ENCODE measurements at regions of chr9 and their contacts with region 1.

Region 1: DNA sequence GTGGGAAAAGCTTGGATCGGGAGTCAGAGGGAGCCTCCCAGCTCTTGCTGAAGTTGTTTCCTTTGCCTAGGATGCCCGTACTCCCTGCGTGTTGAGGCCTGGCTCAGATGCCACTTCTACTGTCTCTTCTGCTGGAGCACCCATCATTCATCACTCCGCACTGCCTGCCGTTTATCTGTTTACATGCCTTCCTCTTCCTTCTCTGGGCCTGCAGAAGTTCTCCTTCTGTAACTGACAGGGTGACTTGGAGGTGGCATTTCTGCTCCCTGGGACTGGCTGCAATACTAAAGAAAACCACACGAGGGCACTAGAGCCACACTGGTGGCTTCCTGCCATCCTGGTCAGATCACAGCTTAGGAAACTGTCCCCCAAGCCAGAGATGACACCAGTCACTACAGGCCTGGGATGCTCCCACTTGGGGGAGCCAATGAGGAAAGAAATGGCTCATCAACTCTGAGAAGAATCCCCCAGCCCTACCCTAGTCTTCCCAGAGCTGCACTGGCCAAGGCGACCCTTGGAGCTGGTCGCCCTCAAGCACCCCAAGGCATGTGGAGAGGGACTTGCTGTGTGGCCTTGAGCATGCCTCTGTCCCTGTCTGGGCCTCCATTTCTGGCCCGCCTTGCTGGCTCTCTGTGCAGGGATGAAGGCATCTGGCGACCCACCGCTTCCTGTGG is 9.7 kb upstream of the SLC25A51 start:
- DNase-seq: peak; percentile 68 to 77 (median 70)
- H3K4me3 ChIP-seq: no peak overlapping the region
- H3K4me3 Mint-ChIP-seq: no peak overlapping the region
- H3K27ac ChIP-seq: no peak overlapping the region
- H3K27ac Mint-ChIP-seq: peak overlapping the region in 1 of 7 donors; percentile 2
- H3K4me1 ChIP-seq: no peaks in the 10 kb centered on the region
- H3K4me1 Mint-ChIP-seq: peaks cover 0 to 4% (median 0%) of the 10 kb centered on the region in 4 donors
- H3K27me3 ChIP-seq: no peaks in the 10 kb centered on the region
- H3K27me3 Mint-ChIP-seq: no peaks in the 10 kb centered on the region

Region 2: GRCh38 chr9:37271679-37272078 is 641.9 kb before region 1 on chr9:
- CTCF ChIA-PET with region 1: no interaction called
- POLR2A ChIA-PET with region 1: no interaction called
- intact Hi-C with region 1: no loop called
- DNase-seq: no peak
- H3K4me3 ChIP-seq: no peak overlapping the region
- H3K4me3 Mint-ChIP-seq: no peak overlapping the region
- H3K27ac ChIP-seq: no peak overlapping the region
- H3K27ac Mint-ChIP-seq: no peak overlapping the region
- H3K4me1 ChIP-seq: no peaks in the 10 kb centered on the region
- H3K4me1 Mint-ChIP-seq: peaks cover 0 to 10% (median under 1%) of the 10 kb centered on the region in 4 donors
- H3K27me3 ChIP-seq: no peaks in the 10 kb centered on the region
- H3K27me3 Mint-ChIP-seq: no peaks in the 10 kb centered on the region

Region 3: GRCh38 chr9:37769306-37769705 is 144.3 kb before region 1 on chr9:
- CTCF ChIA-PET with region 1: no interaction called
- POLR2A ChIA-PET with region 1: no interaction called
- intact Hi-C with region 1: no loop called
- DNase-seq: no peak
- H3K4me3 ChIP-seq: no peak overlapping the region
- H3K4me3 Mint-ChIP-seq: no peak overlapping the region
- H3K27ac ChIP-seq: no peak overlapping the region
- H3K27ac Mint-ChIP-seq: peak overlapping the region in 5 of 7 donors; percentile 30 to 74 (median 59)
- H3K4me1 ChIP-seq: no peaks in the 10 kb centered on the region
- H3K4me1 Mint-ChIP-seq: peaks cover 0 to 5% (median 4%) of the 10 kb centered on the region in 4 donors
- H3K27me3 ChIP-seq: no peaks in the 10 kb centered on the region
- H3K27me3 Mint-ChIP-seq: no peaks in the 10 kb centered on the region

Region 4: GRCh38 chr9:37852222-37852621 is 61.4 kb before region 1 on chr9:
- CTCF ChIA-PET with region 1: no interaction called
- POLR2A ChIA-PET with region 1: no interaction called
- intact Hi-C with region 1: no loop called
- DNase-seq: no peak
- H3K4me3 ChIP-seq: no peak overlapping the region
- H3K4me3 Mint-ChIP-seq: no peak overlapping the region
- H3K27ac ChIP-seq: no peak overlapping the region
- H3K27ac Mint-ChIP-seq: peak overlapping the region in 1 of 7 donors; percentile 22
- H3K4me1 ChIP-seq: no peaks in the 10 kb centered on the region
- H3K4me1 Mint-ChIP-seq: peaks cover 0 to 4% (median 0%) of the 10 kb centered on the region in 4 donors
- H3K27me3 ChIP-seq: no peaks in the 10 kb centered on the region
- H3K27me3 Mint-ChIP-seq: no peaks in the 10 kb centered on the region

Region 5: GRCh38 chr9:38035873-38036272 is 122.3 kb after region 1 on chr9:
- CTCF ChIA-PET with region 1: no interaction called
- POLR2A ChIA-PET with region 1: no interaction called
- intact Hi-C with region 1: no loop called
- DNase-seq: no peak
- H3K4me3 ChIP-seq: no peak overlapping the region
- H3K4me3 Mint-ChIP-seq: no peak overlapping the region
- H3K27ac ChIP-seq: no peak overlapping the region
- H3K27ac Mint-ChIP-seq: peak overlapping the region in 1 of 7 donors; percentile 6
- H3K4me1 ChIP-seq: no peaks in the 10 kb centered on the region
- H3K4me1 Mint-ChIP-seq: no peaks in the 10 kb centered on the region
- H3K27me3 ChIP-seq: no peaks in the 10 kb centered on the region
- H3K27me3 Mint-ChIP-seq: peaks cover 0 to 2% of the 10 kb centered on the region in 2 donors

Region 6: GRCh38 chr9:38160613-38161215 is 247.1 kb after region 1 on chr9:
- CTCF ChIA-PET with region 1: interaction called, 52 read pairs
- POLR2A ChIA-PET with region 1: no interaction called
- intact Hi-C with region 1: no loop called
- DNase-seq: peak in 4 of 5 donors; percentile 26 to 42 (median 33)
- H3K4me3 ChIP-seq: no peak overlapping the region
- H3K4me3 Mint-ChIP-seq: no peak overlapping the region
- H3K27ac ChIP-seq: no peak overlapping the region
- H3K27ac Mint-ChIP-seq: no peak overlapping the region
- H3K4me1 ChIP-seq: no peaks in the 10 kb centered on the region
- H3K4me1 Mint-ChIP-seq: peaks cover 0 to 4% (median 2%) of the 10 kb centered on the region in 4 donors
- H3K27me3 ChIP-seq: no peaks in the 10 kb centered on the region
- H3K27me3 Mint-ChIP-seq: peaks cover 0 to 1% of the 10 kb centered on the region in 2 donors

Region 7: DNA sequence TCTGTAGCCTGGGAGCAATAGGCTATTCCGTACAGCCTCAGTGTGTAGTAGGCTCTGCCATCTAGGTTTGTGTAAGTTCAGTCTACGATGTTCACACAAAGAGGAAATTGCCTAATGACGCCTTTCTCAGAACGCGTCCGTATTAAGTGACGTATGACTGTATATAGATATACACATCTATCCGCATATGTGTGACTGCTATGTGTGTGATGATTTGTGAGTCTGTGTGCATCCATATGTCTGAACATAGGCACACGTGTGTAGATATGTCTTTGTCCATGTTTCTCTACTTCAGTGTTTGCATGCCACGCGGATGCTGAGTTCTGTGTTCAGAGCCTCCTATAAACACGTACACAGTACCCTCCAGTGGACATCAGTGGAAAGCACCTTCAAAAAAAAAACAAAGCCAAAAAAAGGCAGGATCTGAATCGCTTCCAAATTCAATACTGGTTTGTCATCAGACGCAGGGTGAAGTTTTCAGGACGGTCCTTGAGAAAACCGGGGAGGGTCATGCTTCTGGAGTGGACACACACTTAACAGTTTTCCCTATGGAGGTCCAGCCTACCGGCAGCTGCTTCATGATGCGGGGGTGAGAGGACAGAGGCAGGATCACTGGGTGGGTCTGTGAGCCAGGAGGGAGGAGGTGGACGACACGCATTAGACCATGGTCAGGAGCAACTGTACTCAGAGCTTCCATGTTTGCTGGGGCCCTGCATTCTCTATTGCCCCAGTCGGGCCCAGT is 449.4 kb after region 1 on chr9:
- CTCF ChIA-PET with region 1: interaction called, 5 read pairs
- POLR2A ChIA-PET with region 1: no interaction called
- intact Hi-C with region 1: loop called (anchors 1 kb)
- DNase-seq: peak in 4 of 5 donors; percentile 15 to 30 (median 24)
- H3K4me3 ChIP-seq: no peak overlapping the region
- H3K4me3 Mint-ChIP-seq: peak overlapping the region in 7 of 8 donors; percentile 41 to 73 (median 66)
- H3K27ac ChIP-seq: no peak overlapping the region
- H3K27ac Mint-ChIP-seq: peak overlapping the region in 4 of 7 donors; percentile 10 to 53 (median 48)
- H3K4me1 ChIP-seq: no peaks in the 10 kb centered on the region
- H3K4me1 Mint-ChIP-seq: peaks cover 2 to 6% (median 4%) of the 10 kb centered on the region in 4 donors
- H3K27me3 ChIP-seq: no peaks in the 10 kb centered on the region
- H3K27me3 Mint-ChIP-seq: peaks cover 1 to 4% of the 10 kb centered on the region in 2 donors

Region 8: GRCh38 chr9:38432922-38433510 is 519.4 kb after region 1 on chr9:
- CTCF ChIA-PET with region 1: interaction called, 30 read pairs
- POLR2A ChIA-PET with region 1: no interaction called
- intact Hi-C with region 1: loop called (anchors 1 kb)
- DNase-seq: peak in 4 of 5 donors; percentile 6 to 17 (median 15)
- H3K4me3 ChIP-seq: no peak overlapping the region
- H3K4me3 Mint-ChIP-seq: no peak overlapping the region
- H3K27ac ChIP-seq: no peak overlapping the region
- H3K27ac Mint-ChIP-seq: no peak overlapping the region
- H3K4me1 ChIP-seq: no peaks in the 10 kb centered on the region
- H3K4me1 Mint-ChIP-seq: peaks cover 8 to 10% (median 9%) of the 10 kb centered on the region in 4 donors
- H3K27me3 ChIP-seq: no peaks in the 10 kb centered on the region
- H3K27me3 Mint-ChIP-seq: peaks cover 0 to 2% of the 10 kb centered on the region in 2 donors

Measured in CD4-positive, alpha-beta memory T cell (primary cell).